Activated naive CD4-positive, alpha-beta T cell treated with anti-CD3 and anti-CD28 coated beads, Interleukin-2, amount 10 ng/mL, durations not matched to agents 7 days and 5 days (primary cell): ENCODE measurements at regions of chr2 and their contacts with region 1.

Region 1: GRCh38 chr2:143254110-143254509 is 124.9 kb downstream of the ARHGAP15 start:
- DNase-seq: peak; percentile 49
- H3K4me3 Mint-ChIP-seq: peak overlapping the region; percentile 29
- H3K27ac Mint-ChIP-seq: peak overlapping the region; percentile 90
- H3K4me1 Mint-ChIP-seq: peaks cover 81% of the 10 kb centered on the region
- H3K27me3 Mint-ChIP-seq: no peaks in the 10 kb centered on the region

Region 2: GRCh38 chr2:143205106-143205764 is 48.9 kb before region 1 on chr2:
- CTCF ChIA-PET with region 1: interaction called, 50 read pairs
- DNase-seq: peak; percentile 37
- H3K4me3 Mint-ChIP-seq: no peak overlapping the region
- H3K27ac Mint-ChIP-seq: peak overlapping the region; percentile 86
- H3K4me1 Mint-ChIP-seq: peaks cover 47% of the 10 kb centered on the region
- H3K27me3 Mint-ChIP-seq: no peaks in the 10 kb centered on the region

Region 3: GRCh38 chr2:143329288-143329687 is 75.2 kb after region 1 on chr2:
- CTCF ChIA-PET with region 1: no interaction called
- DNase-seq: no peak
- H3K4me3 Mint-ChIP-seq: no peak overlapping the region
- H3K27ac Mint-ChIP-seq: no peak overlapping the region
- H3K4me1 Mint-ChIP-seq: peaks cover 26% of the 10 kb centered on the region
- H3K27me3 Mint-ChIP-seq: no peaks in the 10 kb centered on the region

Region 4: DNA sequence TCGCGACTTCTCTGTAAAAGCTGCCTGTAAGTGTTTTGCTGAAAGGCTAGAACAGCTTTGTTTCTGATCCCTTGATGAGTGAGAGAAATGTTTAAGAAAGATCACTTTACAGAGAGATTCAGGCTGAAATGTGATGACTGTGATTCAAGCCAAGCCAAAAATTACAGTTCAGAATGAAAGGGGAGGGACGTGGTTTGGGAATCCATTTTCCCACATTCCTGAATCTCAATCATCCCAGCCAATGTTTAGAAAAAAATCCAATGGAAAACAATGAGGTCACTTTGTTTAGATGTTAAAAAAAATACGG is 291.8 kb after region 1 on chr2:
- CTCF ChIA-PET with region 1: no interaction called
- DNase-seq: no peak
- H3K4me3 Mint-ChIP-seq: no peak overlapping the region
- H3K27ac Mint-ChIP-seq: peak overlapping the region; percentile 37
- H3K4me1 Mint-ChIP-seq: peaks cover 32% of the 10 kb centered on the region
- H3K27me3 Mint-ChIP-seq: no peaks in the 10 kb centered on the region